Panc1 (cell line): ENCODE measurements at regions of chr16 and their contacts with region 1.

Region 1: DNA sequence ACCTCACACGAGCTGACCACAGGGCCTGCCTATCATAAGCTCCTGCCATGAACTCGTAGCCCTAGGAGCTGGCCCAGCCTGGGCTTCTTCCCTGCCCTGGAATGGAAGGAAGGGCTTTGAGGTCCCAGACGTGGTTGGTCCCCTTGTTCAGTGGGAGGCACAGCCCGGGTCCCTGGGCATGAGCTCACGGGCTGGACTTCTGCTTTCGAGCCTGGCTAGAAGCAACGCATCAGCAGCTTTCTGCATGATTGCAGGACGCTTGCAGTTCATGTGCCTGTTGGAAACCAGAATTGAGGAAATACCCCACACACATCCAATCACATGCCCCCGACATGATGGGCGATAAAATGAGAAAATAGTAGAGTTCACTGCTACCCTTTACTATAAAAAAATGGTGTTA is 293.3 kb downstream of the MAF start:
- DNase-seq: no peak
- ATAC-seq: no peak
- H3K4me3 ChIP-seq: no peak overlapping the region
- H3K27ac ChIP-seq: no peak overlapping the region
- H3K4me1 ChIP-seq: no peaks in the 10 kb centered on the region
- H3K27me3 ChIP-seq: no peaks in the 10 kb centered on the region
- CTCF ChIP-seq: no peak

Region 2: GRCh38 chr16:79334127-79334526 is 26.9 kb after region 1 on chr16:
- CTCF ChIA-PET with region 1: interaction called, 12 read pairs
- POLR2A ChIA-PET with region 1: no interaction called
- in situ Hi-C with region 1: no loop called
- intact Hi-C with region 1: no loop called
- DNase-seq: no peak
- ATAC-seq: no peak
- H3K4me3 ChIP-seq: no peak overlapping the region
- H3K27ac ChIP-seq: no peak overlapping the region
- H3K4me1 ChIP-seq: no peaks in the 10 kb centered on the region
- H3K27me3 ChIP-seq: no peaks in the 10 kb centered on the region
- CTCF ChIP-seq: peak; percentile 47

Region 3: GRCh38 chr16:79632296-79632695 is 325.1 kb after region 1 on chr16:
- CTCF ChIA-PET with region 1: no interaction called
- POLR2A ChIA-PET with region 1: interaction called, 15 read pairs
- in situ Hi-C with region 1: no loop called
- intact Hi-C with region 1: no loop called
- DNase-seq: no peak
- ATAC-seq: no peak
- H3K4me3 ChIP-seq: no peak overlapping the region
- H3K27ac ChIP-seq: no peak overlapping the region
- H3K4me1 ChIP-seq: no peaks in the 10 kb centered on the region
- H3K27me3 ChIP-seq: no peaks in the 10 kb centered on the region
- CTCF ChIP-seq: no peak